GM13976 (cell line): ENCODE measurements at regions of chr9 and their contacts with region 1.

Region 1: DNA sequence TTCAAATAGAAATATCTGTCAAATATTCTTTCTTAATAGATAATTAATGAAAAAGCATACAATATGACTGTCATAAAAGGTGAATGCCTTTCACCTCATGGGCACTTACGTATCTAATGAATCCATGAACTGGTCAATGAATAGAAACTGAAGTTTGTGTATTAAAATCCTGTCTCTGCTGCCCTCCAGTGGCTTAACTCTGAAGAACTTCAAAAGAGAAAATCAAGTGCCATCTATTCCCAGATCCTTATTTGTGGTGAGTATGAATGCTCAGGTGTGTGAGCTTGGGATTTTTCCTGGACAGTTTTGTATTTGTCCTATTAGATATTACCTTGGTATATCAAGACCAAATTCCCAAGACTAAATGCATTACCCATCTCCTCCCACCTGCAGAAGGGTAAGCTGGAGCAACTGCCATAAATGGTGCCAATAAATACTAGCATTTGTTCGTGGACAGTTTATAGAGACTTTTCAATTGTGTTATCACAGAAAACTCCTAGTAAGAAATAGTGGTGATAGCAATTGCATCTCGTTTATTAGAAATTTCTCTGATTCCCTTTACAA is 44.0 kb upstream of the SVEP1 start:
- DNase-seq: peak; percentile 25
- CTCF ChIP-seq: peak; percentile 49

Region 2: GRCh38 chr9:110217656-110218099 is 405.9 kb before region 1 on chr9:
- in situ Hi-C with region 1: loop called (anchors 25 kb)
- DNase-seq: peak; percentile 34
- CTCF ChIP-seq: peak; percentile 70

Region 3: DNA sequence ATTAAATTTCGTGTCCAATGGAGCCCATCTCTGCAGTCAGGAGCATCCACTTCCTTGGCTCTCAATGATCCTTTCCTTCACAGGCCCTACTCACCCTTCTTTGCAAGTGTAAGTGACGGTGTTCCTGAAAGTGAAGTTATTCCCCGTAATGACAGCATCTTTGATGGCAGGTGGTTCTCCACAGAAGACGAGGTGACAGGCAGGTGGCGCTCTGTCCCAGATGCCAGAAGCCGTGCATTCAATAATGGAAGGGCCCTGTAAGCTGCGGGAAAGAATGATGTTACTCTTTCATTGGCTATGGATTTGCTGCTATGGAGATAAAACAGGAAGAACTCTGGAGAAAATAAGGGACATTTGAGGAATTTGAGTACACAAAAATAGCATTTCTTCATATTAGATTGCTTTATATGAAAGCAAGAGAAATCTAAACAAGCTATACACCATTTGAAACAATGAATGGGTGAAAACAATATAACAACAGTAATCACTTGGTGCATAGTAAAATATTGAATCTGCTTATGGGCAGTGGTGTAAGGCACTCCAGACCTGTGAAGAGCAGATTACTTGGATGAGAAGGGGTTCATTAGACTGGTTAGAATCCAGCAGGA is 195.9 kb before region 1 on chr9:
- in situ Hi-C with region 1: loop called (anchors 25 kb)
- DNase-seq: peak; percentile 39
- CTCF ChIP-seq: peak; percentile 73